PC-9 (cell line): ENCODE measurements at regions of chr3 and their contacts with region 1.

Region 1: DNA sequence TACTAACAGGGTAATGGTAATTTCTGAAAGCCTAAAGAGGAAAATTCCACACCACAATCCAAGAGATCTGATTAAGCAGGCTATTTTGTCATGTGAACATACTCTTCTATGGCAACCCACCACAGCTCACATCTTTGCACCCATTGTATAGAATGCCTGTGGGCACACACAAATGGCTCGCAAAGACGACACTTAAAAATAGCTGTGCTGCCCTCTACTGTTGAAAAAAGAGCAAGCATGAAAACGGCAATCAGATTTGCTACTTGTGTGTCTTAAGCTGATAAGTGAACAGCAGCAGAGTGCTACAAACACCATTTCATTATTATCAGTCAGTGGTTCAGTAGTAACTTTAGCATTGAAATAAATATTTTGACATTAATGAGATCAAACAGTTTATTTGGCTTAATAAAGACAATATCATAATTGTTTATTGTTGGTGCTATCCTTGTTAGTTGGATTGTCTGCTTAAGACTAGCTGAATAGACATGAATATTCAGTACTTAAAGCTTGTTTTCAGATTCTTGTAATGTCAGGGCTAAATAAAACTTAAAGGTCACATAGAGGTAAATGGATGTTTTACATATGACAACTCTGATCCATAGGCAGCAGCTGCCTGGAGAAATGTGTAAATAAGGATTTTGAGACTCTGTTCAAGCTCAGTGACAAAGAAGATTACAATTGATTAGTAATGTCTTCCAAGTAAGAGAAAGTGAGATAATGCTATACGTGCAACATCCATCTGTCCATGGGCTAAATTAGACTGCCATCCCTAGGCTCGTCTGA is 199.1 kb downstream of the LRRN1 start:
- DNase-seq: peak in 1 of 2 experiments; percentile 10
- H3K4me3 ChIP-seq: no peak overlapping the region
- H3K27ac ChIP-seq: no peak overlapping the region
- H3K4me1 ChIP-seq: no peaks in the 10 kb centered on the region
- H3K27me3 ChIP-seq: no peaks in the 10 kb centered on the region
- CTCF ChIP-seq: peak; percentile 40; the same call in 1 of the 2 replicates

Region 2: DNA sequence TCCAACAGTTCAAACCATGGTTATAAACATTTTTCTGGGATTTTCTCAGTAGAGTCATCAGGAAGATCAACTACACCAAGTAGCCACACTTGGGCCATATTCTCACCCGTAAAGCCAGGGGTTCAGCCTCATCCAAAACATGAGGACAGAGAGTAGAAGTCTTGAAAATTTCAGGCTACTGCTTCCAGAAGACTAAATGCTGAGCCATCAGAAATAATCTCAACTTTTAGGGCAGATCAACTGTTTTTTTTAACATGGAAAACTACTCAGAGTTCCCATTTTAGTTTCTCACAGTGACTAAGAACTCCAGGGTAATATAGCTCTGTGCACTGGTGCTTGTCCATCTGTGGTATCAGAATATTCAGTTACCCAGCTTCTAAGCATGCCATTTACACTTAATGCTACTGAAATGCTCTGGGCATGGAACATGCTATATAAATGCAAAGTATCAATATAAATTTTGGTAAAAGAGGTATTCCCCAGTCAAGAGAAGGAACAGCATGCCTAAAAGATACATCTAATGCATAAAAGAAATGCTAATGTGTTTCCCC is 499.2 kb before region 1 on chr3:
- CTCF ChIA-PET with region 1: no interaction called
- POLR2A ChIA-PET with region 1: no interaction called
- intact Hi-C with region 1: loop called (anchors 10 kb)
- DNase-seq: no peak
- H3K4me3 ChIP-seq: no peak overlapping the region
- H3K27ac ChIP-seq: no peak overlapping the region
- H3K4me1 ChIP-seq: no peaks in the 10 kb centered on the region
- H3K27me3 ChIP-seq: no peaks in the 10 kb centered on the region
- CTCF ChIP-seq: no peak

Region 3: DNA sequence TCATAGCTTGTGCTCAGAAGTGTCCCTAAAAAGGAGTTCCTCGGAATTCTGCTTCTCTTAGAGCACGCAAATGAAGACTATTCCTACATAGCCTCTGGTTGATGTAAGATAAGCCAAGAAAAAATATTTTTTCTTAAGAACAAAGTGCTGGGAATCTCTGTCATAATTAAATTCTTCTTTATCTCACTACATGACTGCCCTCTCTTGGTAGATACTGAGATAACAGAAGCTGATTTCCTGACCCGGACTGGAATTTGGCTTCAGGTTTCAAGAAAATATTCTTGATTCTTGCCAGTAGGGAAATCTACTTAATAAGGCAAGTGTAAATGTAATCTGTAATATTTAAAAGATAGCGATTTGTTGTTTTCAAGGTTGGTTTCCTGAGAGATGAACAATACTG is 273.5 kb after region 1 on chr3:
- CTCF ChIA-PET with region 1: no interaction called
- POLR2A ChIA-PET with region 1: no interaction called
- intact Hi-C with region 1: loop called (anchors 10 kb)
- DNase-seq: no peak
- H3K4me3 ChIP-seq: no peak overlapping the region
- H3K27ac ChIP-seq: no peak overlapping the region
- H3K4me1 ChIP-seq: no peaks in the 10 kb centered on the region
- H3K27me3 ChIP-seq: no peaks in the 10 kb centered on the region
- CTCF ChIP-seq: peak; percentile 68